Activated naive CD4-positive, alpha-beta T cell treated with anti-CD3 and anti-CD28 coated beads, Interleukin-2, amount 10 ng/mL, durations not matched to agents 7 days and 5 days (primary cell): ENCODE measurements at regions of chr1 and their contacts with region 1.

Region 1: DNA sequence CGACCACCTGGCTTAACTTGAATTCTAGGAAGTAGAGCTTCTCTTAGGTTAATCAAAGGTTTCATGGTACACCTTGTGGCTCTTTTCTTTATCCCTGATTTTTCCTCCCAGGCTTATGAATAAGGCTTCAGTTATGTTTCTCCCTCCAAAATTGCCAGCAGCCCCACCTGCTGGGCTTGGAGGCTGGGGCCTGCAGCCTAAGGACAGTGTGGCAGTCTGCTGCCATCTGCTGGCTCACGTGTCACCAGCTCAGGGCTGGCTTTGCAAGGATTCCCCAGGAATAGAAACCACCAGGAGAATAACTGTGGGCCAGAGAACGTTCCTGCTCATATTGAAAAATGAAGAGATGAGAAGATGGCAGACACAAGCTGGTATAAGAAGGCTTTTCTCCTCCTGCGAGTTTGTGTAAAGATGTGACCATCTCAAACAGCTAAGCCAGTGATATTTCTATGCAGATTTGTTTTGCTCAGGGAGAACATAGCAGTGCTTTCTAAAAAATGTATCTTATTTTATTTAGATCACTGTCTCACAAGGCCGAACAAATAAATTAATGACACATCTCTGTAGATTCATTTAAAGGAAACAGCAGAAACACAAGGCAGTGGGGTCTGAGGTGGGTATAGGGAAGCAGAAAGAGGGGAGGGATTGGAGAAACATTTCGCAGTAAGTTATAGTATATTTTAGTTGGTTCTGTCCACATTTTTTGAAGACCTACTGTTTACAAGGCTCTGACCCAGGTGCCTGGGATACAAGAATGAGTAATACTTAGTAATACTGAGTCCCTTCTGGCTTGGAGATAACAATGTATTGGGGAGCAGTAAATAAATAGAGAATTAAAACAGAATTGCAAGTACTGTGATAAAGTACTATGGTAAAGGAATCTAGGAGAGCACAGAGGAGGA is 291.1 kb upstream of the SGIP1 start:
- DNase-seq: peak; percentile 85
- H3K4me3 Mint-ChIP-seq: no peak overlapping the region
- H3K27ac Mint-ChIP-seq: no peak overlapping the region
- H3K4me1 Mint-ChIP-seq: peaks cover 3% of the 10 kb centered on the region
- H3K27me3 Mint-ChIP-seq: peaks cover 6% of the 10 kb centered on the region

Region 2: GRCh38 chr1:65958561-65959350 is 284.1 kb before region 1 on chr1:
- CTCF ChIA-PET with region 1: interaction called, 306 read pairs
- DNase-seq: no peak
- H3K4me3 Mint-ChIP-seq: no peak overlapping the region
- H3K27ac Mint-ChIP-seq: no peak overlapping the region
- H3K4me1 Mint-ChIP-seq: peaks cover 6% of the 10 kb centered on the region
- H3K27me3 Mint-ChIP-seq: no peaks in the 10 kb centered on the region

Region 3: GRCh38 chr1:66172272-66172671 is 70.6 kb before region 1 on chr1:
- CTCF ChIA-PET with region 1: interaction called, 16 read pairs
- DNase-seq: no peak
- H3K4me3 Mint-ChIP-seq: no peak overlapping the region
- H3K27ac Mint-ChIP-seq: no peak overlapping the region
- H3K4me1 Mint-ChIP-seq: peaks cover 28% of the 10 kb centered on the region
- H3K27me3 Mint-ChIP-seq: peaks cover 16% of the 10 kb centered on the region

Region 4: DNA sequence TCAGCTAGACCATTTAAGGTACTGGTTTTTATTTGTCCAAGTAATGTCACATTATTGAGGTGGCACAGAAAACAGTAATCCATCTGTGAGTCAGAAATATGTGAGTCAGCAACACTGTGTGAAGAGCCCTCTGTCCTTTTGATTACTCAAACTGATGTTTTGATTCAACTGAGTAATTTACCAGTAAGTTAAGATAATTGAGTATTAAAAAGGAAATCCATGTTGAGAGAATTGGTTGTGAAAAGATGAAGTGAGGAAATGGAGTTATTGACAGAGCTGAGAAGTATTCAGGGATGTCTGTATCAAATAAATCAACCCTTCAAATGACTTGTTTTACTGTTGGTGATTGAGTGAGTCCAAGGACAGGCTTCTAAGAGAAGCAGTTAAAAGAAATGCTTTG is 11.7 kb before region 1 on chr1:
- CTCF ChIA-PET with region 1: interaction called, 57 read pairs
- DNase-seq: no peak
- H3K4me3 Mint-ChIP-seq: no peak overlapping the region
- H3K27ac Mint-ChIP-seq: no peak overlapping the region
- H3K4me1 Mint-ChIP-seq: no peaks in the 10 kb centered on the region
- H3K27me3 Mint-ChIP-seq: peaks cover 16% of the 10 kb centered on the region

Region 5: DNA sequence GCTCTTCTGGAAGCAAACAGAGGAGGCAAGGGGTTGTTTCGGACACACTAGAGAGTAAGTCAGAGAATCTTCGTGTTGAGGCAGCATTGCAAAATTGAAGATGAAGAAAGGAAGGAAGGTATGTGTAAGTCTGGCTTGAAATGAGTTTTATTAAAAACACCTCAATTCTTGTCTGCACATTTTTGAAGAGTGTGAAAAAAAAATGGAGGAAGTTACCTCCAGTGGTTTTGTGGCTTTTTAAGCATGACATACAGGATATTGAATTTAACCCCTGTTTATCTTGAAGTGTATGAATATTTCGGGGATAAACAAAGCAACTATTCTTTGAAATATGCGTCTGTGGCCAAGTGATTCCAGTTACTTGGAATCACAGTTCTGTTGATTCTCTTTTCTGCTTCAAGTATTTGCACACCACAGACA is 87.8 kb after region 1 on chr1:
- CTCF ChIA-PET with region 1: no interaction called
- DNase-seq: no peak
- H3K4me3 Mint-ChIP-seq: peak overlapping the region; percentile 98
- H3K27ac Mint-ChIP-seq: peak overlapping the region; percentile 98
- H3K4me1 Mint-ChIP-seq: peaks cover 44% of the 10 kb centered on the region
- H3K27me3 Mint-ChIP-seq: no peaks in the 10 kb centered on the region

Region 6: GRCh38 chr1:66436378-66437145 is 193.7 kb after region 1 on chr1:
- CTCF ChIA-PET with region 1: interaction called, 18 read pairs
- DNase-seq: peak; percentile 56
- H3K4me3 Mint-ChIP-seq: no peak overlapping the region
- H3K27ac Mint-ChIP-seq: peak overlapping the region; percentile 24
- H3K4me1 Mint-ChIP-seq: peaks cover 37% of the 10 kb centered on the region
- H3K27me3 Mint-ChIP-seq: peaks cover 10% of the 10 kb centered on the region